SK-N-SH (cell line): ENCODE measurements at regions of chr16 and their contacts with region 1.

Region 1: DNA sequence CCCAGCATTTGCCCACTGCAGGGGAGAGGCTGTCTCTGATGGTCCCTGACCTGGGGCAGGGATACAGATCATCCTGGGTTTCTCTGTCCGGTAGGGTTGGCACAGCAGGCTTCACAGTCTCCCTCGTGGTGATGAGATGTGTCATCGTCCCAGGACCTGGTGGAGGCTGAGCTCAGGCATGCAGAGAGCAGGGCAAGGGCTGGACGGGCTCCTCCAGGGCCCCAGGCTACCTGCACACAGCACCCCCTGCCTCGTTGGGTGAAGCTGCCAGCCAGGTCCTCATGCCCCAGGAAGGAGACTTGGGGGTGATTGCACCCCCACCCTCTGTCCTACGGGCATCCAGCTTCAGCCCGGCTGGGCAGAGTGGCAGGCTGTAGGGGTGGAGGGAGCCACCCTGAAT is 155.7 kb upstream of the GSE1 start:
- DNase-seq: no peak
- H3K4me3 ChIP-seq: no peak overlapping the region
- H3K27ac ChIP-seq: peak overlapping the region in 1 of 2 experiments; percentile 58; a peak in 2 of 4 replicates
- H3K4me1 ChIP-seq: peaks cover 17 to 78% of the 10 kb centered on the region in 2 experiments; a peak in 3 of 4 replicates
- H3K27me3 ChIP-seq: no peaks in the 10 kb centered on the region
- CTCF ChIP-seq: no peak
- EP300 ChIP-seq: no peak
- RAD21 ChIP-seq: no peak

Region 2: DNA sequence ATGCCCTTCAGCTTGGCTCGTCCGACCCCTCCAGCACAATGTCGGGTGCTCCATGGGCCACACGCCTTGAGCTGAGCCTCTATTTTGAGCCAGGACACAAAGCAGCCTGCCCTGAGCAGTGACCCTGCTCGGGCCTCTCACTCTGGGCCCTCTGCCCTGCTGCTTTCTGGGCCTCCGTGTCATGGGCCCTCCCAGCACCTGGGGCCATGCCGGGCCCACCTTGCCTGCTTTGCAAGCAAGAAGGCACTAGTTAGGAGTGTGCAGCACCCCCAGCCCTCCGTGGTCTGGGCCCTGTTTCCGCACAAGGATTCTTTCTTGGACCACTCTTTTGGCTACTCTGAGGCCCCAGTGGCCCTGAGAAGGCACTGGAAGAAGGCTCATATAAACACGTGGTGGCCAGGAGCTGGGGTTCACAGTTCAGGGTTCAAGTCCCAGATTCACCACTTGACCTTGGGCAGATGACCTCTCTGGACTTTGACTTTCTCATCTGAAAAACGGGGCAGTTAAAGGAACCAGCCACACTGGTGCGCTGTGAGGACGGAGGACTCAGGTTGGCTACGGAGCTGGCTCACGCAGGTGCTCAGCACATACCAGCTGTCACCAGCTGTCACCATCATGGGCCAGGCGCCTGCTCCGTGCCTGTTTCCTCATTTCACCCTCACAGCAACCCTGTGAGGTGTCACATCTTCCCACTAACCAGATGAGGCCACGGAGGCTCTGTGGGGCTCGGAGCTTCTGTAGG is 10.3 kb before region 1 on chr16:
- CTCF ChIA-PET with region 1: interaction called, 10 read pairs
- POLR2A ChIA-PET with region 1: interaction called, 9 read pairs
- DNase-seq: no peak
- H3K4me3 ChIP-seq: no peak overlapping the region
- H3K27ac ChIP-seq: peak overlapping the region in 1 of 2 experiments; percentile 97; a peak in 2 of 4 replicates
- H3K4me1 ChIP-seq: peaks cover 0 to 69% of the 10 kb centered on the region in 2 experiments; a peak in 2 of 4 replicates
- H3K27me3 ChIP-seq: no peaks in the 10 kb centered on the region
- CTCF ChIP-seq: no peak
- EP300 ChIP-seq: no peak
- RAD21 ChIP-seq: no peak